Left lung (tissue), 14 donors: ENCODE measurements at regions of chr4 and their contacts with region 1.

Region 1: GRCh38 chr4:185210102-185210981 is 944 bp downstream of the SNX25 start:
- DNase-seq: peak in 3 of 4 donors; percentile 75 to 85 (median 75)
- ATAC-seq: peak; percentile 2
- H3K4me3 ChIP-seq: peak overlapping the region; percentile 50 to 58
- H3K27ac ChIP-seq: peak overlapping the region; percentile 78 to 92
- H3K4me1 ChIP-seq: peaks cover 0 to 16% of the 10 kb centered on the region in 2 donors
- H3K27me3 ChIP-seq: peaks cover 0 to 67% of the 10 kb centered on the region in 2 donors
- CTCF ChIP-seq: no peak

Region 2: DNA sequence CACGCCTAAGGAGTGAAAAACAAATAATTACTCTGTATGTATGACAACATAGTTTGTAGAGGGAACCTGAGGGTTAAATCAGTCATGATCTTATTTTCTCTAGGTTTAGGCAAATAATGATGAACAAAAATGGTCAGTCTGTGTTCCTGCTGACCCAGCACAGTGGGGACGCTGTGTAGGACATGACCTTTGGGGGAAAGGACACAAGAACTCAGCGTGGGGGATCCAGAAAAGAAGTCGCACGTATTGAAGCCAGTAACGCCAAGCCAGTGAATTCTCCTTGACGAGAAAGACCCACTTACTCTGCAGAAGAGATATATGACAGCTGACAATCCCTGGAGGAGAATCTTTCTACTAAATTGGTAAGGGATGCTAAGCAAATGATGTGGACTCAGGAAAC is 155.5 kb before region 1 on chr4:
- intact Hi-C with region 1: no loop called
- DNase-seq: no peak
- ATAC-seq: no peak
- H3K4me3 ChIP-seq: no peak overlapping the region
- H3K27ac ChIP-seq: no peak overlapping the region
- H3K4me1 ChIP-seq: no peaks in the 10 kb centered on the region
- H3K27me3 ChIP-seq: no peaks in the 10 kb centered on the region
- CTCF ChIP-seq: no peak

Region 3: DNA sequence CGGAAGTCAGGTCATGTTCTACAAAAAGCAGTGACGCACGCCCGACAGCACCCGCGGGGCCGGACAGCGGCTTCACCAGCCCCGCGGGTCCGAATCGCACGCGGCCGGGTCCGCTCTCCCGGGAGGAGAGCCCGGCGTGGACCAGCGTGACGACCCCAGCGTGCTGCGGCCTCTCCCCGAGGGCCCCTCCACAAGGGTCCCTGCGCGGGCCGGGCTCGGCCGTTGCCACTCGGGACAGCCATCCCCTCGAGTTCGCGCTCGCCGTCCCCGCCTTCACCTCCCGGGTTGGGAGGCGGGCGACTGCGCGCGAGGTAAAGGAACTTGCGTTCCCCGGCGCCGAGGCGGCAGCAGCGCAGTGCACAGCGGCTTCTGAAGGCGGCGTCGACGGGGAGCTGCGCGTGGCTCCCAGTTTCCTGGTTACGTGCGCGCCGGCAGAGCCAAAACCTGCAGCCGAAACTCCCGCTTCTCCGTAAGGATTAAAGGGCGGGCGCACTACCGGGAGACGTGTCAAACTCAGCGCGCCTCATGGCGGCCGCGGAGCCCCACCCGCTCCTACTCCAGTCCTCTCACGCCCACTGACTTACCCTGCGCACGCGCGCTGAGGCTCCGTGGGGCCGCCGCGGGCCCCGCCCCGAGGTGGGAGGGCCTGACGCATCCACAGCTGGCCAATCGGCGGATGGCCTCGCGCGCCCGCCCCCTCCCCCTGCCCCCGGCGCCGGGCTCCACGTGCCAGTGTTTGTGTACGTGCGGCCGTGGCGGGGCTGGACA is 185.8 kb after region 1 on chr4:
- intact Hi-C with region 1: loop called in 1 of 2 experiments (anchors 10 kb)
- DNase-seq: peak; percentile 96 to 99 (median 98)
- ATAC-seq: peak; percentile 91
- H3K4me3 ChIP-seq: peak overlapping the region; percentile 89 to 92
- H3K27ac ChIP-seq: peak overlapping the region; percentile 98 to 100
- H3K4me1 ChIP-seq: peaks cover 7 to 37% of the 10 kb centered on the region in 2 donors
- H3K27me3 ChIP-seq: no peaks in the 10 kb centered on the region
- CTCF ChIP-seq: no peak